Naive thymus-derived CD4-positive, alpha-beta T cell (primary cell): ENCODE measurements at regions of chr2 and their contacts with region 1.

Region 1: DNA sequence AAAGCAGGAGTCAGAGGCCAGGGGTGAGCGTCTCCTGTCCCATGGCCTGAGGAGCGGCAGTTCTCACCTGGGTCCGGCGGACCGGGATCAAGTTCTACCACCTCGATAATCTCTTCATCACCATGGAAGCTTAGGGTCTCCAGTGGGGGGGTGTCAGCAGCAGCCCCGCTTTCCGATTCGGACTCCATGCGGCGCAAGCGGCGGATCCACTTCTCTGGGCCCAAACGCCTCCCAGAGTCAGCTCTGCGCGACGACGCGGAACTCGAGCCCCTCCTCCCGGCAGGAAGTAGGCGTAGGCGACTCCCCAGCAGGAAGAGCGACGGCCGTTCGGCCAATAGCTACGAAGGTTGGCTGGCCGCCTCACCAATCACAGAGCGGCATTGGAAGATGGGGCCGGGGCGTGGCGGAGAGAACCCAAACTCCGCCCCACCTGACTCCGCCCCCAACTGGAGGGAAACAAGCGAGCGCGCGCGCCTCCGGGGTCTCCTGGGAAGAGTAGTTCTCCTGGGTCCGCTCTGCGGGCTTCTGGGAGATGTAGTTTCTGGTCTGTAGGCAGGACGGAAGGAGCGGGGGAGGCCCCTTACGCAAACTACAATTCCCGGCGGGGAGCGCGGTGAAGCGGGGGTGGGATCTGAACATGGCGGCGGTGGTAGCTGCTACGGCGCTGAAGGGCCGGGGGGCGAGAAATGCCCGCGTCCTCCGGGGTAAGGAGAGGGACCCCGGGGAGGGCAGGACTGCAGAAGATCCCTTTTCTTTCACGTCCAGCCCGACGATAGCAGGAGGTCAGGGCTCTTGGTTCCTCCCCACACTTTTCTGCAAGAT is at the starts of genes AAMP and PNKD:
- DNase-seq: peak; percentile 99 to 100 (median 100)
- ATAC-seq: peak; percentile 95
- H3K4me3 ChIP-seq: peak within 1 kb of the TSS; percentile 96
- H3K4me3 Mint-ChIP-seq: peak within 1 kb of the TSS; percentile 84 to 99 (median 93)
- H3K27ac ChIP-seq: peak within 1 kb of the TSS; percentile 92
- H3K27ac Mint-ChIP-seq: peak within 1 kb of the TSS; percentile 82 to 95 (median 92)
- H3K4me1 ChIP-seq: peaks cover 27 to 30% of the 10 kb centered on the region in 2 donors
- H3K4me1 Mint-ChIP-seq: peaks cover 30 to 59% (median 51%) of the 10 kb centered on the region in 7 donors
- H3K27me3 ChIP-seq: no peaks in the 10 kb centered on the region
- H3K27me3 Mint-ChIP-seq: no peaks in the 10 kb centered on the region
- total RNA-seq, gene AAMP: 54.1 to 67.0 (median 61.2) TPM
- total RNA-seq, gene PNKD: 18.5 to 38.4 (median 25.2) TPM

Region 2: GRCh38 chr2:218138072-218138471 is 132.0 kb before region 1 on chr2:
- CTCF ChIA-PET with region 1: no interaction called
- POLR2A ChIA-PET with region 1: no interaction called
- intact Hi-C with region 1: no loop called
- DNase-seq: no peak
- ATAC-seq: no peak
- H3K4me3 ChIP-seq: no peak overlapping the region
- H3K4me3 Mint-ChIP-seq: no peak overlapping the region
- H3K27ac ChIP-seq: no peak overlapping the region
- H3K27ac Mint-ChIP-seq: no peak overlapping the region
- H3K4me1 ChIP-seq: no peaks in the 10 kb centered on the region
- H3K4me1 Mint-ChIP-seq: peaks cover 0 to 9% (median 0%) of the 10 kb centered on the region in 7 donors
- H3K27me3 ChIP-seq: no peaks in the 10 kb centered on the region
- H3K27me3 Mint-ChIP-seq: peaks cover 17 to 42% (median 32%) of the 10 kb centered on the region in 5 donors

Region 3: DNA sequence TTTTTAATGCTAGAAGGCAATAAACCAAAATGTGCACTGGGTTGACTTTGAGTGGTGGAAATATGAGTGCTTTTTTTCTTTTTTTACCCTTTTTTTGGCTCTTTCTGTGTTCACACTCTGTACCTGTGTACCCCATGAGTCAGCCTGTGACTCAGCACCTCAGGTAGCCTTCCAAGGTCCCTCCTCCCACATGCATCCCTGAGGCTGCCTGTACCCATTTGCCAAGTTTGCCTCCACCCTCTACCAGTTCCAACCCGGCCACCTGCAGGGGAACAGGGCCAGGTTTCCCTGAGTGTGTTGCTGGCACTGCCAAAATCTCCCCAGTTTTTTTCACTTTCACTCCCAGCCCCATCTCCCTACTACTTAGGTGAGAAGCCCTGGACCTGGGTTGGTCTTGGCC is 117.3 kb before region 1 on chr2:
- CTCF ChIA-PET with region 1: no interaction called
- POLR2A ChIA-PET with region 1: no interaction called
- intact Hi-C with region 1: no loop called
- DNase-seq: no peak
- ATAC-seq: no peak
- H3K4me3 ChIP-seq: no peak overlapping the region
- H3K4me3 Mint-ChIP-seq: no peak overlapping the region
- H3K27ac ChIP-seq: no peak overlapping the region
- H3K27ac Mint-ChIP-seq: no peak overlapping the region
- H3K4me1 ChIP-seq: no peaks in the 10 kb centered on the region
- H3K4me1 Mint-ChIP-seq: peaks cover 0 to 8% (median 0%) of the 10 kb centered on the region in 7 donors
- H3K27me3 ChIP-seq: no peaks in the 10 kb centered on the region
- H3K27me3 Mint-ChIP-seq: peaks cover 0 to 42% (median 0%) of the 10 kb centered on the region in 5 donors

Region 4: DNA sequence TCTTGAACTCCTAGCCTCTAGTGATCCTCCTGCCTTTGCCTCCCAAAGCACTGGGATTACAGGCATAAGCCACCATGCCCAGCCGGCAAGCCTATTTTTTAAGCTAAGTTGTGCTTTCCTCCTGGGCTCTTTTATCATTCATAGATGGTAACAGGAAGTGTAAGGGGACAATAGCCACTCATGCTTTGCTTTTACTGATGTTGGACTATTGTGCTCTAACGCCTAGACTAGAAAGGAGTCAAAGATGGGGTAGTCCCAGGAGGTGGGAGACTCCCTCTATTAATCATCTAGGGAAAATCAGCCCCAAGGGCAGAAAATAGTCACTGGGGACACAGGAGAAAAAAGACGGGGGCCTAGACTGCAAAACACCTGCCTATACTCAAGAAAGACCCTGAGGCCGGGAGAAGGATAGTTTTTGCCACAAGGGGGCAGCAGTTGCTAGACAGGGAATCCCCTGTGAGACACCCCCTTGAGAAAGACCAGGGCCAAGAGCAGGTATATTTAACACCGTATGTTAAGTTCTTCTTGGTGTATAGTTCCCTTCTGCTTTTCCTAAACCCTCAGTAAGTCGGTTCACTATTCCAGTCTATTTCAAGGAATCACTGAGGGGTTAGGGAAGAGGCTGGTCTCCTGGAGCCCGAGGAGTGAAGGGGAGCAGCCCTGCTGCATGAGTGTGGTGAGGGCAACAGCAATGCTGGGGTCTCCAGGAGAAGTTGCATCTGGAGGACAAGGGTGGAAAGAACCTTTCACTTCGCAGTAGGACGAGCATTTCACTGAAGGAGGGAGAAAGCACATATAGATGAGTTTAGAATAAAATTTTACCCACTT is 101.3 kb before region 1 on chr2:
- CTCF ChIA-PET with region 1: no interaction called
- POLR2A ChIA-PET with region 1: no interaction called
- intact Hi-C with region 1: loop called in 1 of 2 experiments (anchors 1 kb)
- DNase-seq: peak; percentile 28 to 62 (median 52)
- ATAC-seq: peak; percentile 69
- H3K4me3 ChIP-seq: no peak overlapping the region
- H3K4me3 Mint-ChIP-seq: peak overlapping the region in 3 of 10 donors; percentile 7 to 34 (median 21)
- H3K27ac ChIP-seq: no peak overlapping the region
- H3K27ac Mint-ChIP-seq: peak overlapping the region in 2 of 9 donors; percentile 19 to 37
- H3K4me1 ChIP-seq: peaks cover 19 to 26% of the 10 kb centered on the region in 2 donors
- H3K4me1 Mint-ChIP-seq: peaks cover 28 to 41% (median 38%) of the 10 kb centered on the region in 7 donors
- H3K27me3 ChIP-seq: no peaks in the 10 kb centered on the region
- H3K27me3 Mint-ChIP-seq: peaks cover 0 to 51% (median 6%) of the 10 kb centered on the region in 5 donors

Region 5: GRCh38 chr2:218286570-218287459 is 16.7 kb after region 1 on chr2:
- CTCF ChIA-PET with region 1: interaction called, 188 read pairs
- POLR2A ChIA-PET with region 1: interaction called, 125 read pairs
- intact Hi-C with region 1: loop called (anchors 1 kb)
- DNase-seq: peak; percentile 53 to 90 (median 78)
- ATAC-seq: peak; percentile 87
- H3K4me3 ChIP-seq: peak overlapping the region; percentile 66
- H3K4me3 Mint-ChIP-seq: peak overlapping the region; percentile 85 to 97 (median 94)
- H3K27ac ChIP-seq: peak overlapping the region; percentile 93
- H3K27ac Mint-ChIP-seq: peak overlapping the region; percentile 95 to 99 (median 99)
- H3K4me1 ChIP-seq: peaks cover 74 to 77% of the 10 kb centered on the region in 2 donors
- H3K4me1 Mint-ChIP-seq: peaks cover 53 to 87% (median 76%) of the 10 kb centered on the region in 7 donors
- H3K27me3 ChIP-seq: no peaks in the 10 kb centered on the region
- H3K27me3 Mint-ChIP-seq: no peaks in the 10 kb centered on the region

Region 6: DNA sequence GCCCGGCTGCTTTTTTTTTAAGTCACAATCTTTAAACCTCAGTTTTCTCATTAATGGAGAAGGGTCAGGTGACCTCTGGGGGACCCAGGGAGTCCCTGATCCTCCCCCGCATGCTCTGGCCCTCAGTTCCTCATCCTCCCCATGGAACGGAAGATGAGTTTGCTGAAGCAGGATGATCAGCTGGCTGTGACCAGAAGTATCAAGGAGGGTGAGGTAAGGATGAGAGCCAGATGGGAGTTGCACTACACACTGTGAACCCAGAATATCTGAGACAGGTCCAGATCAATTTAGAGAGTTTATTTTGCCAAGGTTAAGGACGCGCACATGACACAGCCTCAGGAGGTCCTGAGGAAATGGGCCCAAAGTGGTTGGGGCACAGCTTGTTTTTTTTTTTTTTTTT is 90.3 kb after region 1 on chr2:
- CTCF ChIA-PET with region 1: interaction called, 79 read pairs
- POLR2A ChIA-PET with region 1: interaction called, 16 read pairs
- intact Hi-C with region 1: loop called (anchors 1 kb)
- DNase-seq: no peak
- ATAC-seq: peak; percentile 68
- H3K4me3 ChIP-seq: no peak overlapping the region
- H3K4me3 Mint-ChIP-seq: no peak overlapping the region
- H3K27ac ChIP-seq: no peak overlapping the region
- H3K27ac Mint-ChIP-seq: no peak overlapping the region
- H3K4me1 ChIP-seq: no peaks in the 10 kb centered on the region
- H3K4me1 Mint-ChIP-seq: peaks cover 0 to 6% (median under 1%) of the 10 kb centered on the region in 7 donors
- H3K27me3 ChIP-seq: no peaks in the 10 kb centered on the region
- H3K27me3 Mint-ChIP-seq: peaks cover 0 to 6% (median 0%) of the 10 kb centered on the region in 5 donors

Region 7: GRCh38 chr2:218568190-218569037 is 298.3 kb after region 1 on chr2 and contains the starts of genes CNOT9 and USP37:
- CTCF ChIA-PET with region 1: no interaction called
- POLR2A ChIA-PET with region 1: no interaction called
- intact Hi-C with region 1: loop called (anchors 1 kb)
- DNase-seq: peak; percentile 99 to 100 (median 100)
- ATAC-seq: peak; percentile 95
- H3K4me3 ChIP-seq: peak within 1 kb of the TSS; percentile 78
- H3K4me3 Mint-ChIP-seq: peak within 1 kb of the TSS; percentile 90 to 100 (median 98)
- H3K27ac ChIP-seq: peak within 1 kb of the TSS; percentile 96
- H3K27ac Mint-ChIP-seq: peak within 1 kb of the TSS; percentile 97 to 100 (median 99)
- H3K4me1 ChIP-seq: peaks cover 22 to 31% of the 10 kb centered on the region in 2 donors
- H3K4me1 Mint-ChIP-seq: peaks cover 45 to 73% (median 64%) of the 10 kb centered on the region in 7 donors
- H3K27me3 ChIP-seq: no peaks in the 10 kb centered on the region
- H3K27me3 Mint-ChIP-seq: no peaks in the 10 kb centered on the region
- total RNA-seq, gene CNOT9: 44.7 to 99.6 (median 53.8) TPM
- total RNA-seq, gene USP37: 16.6 to 36.3 (median 28.1) TPM

Region 8: GRCh38 chr2:218892693-218893348 is 622.7 kb after region 1 on chr2:
- CTCF ChIA-PET with region 1: no interaction called
- POLR2A ChIA-PET with region 1: no interaction called
- intact Hi-C with region 1: loop called in 1 of 2 experiments (anchors 5 kb)
- DNase-seq: peak; percentile 82 to 93 (median 91)
- ATAC-seq: peak; percentile 78
- H3K4me3 ChIP-seq: peak overlapping the region; percentile 48
- H3K4me3 Mint-ChIP-seq: peak overlapping the region; percentile 58 to 85 (median 75)
- H3K27ac ChIP-seq: peak overlapping the region; percentile 89
- H3K27ac Mint-ChIP-seq: peak overlapping the region; percentile 59 to 96 (median 89)
- H3K4me1 ChIP-seq: peaks cover 53 to 54% of the 10 kb centered on the region in 2 donors
- H3K4me1 Mint-ChIP-seq: peaks cover 38 to 56% (median 52%) of the 10 kb centered on the region in 7 donors
- H3K27me3 ChIP-seq: no peaks in the 10 kb centered on the region
- H3K27me3 Mint-ChIP-seq: peaks cover 0 to 76% (median 0%) of the 10 kb centered on the region in 5 donors

Region 9: GRCh38 chr2:219543601-219544358 is 1273.7 kb after region 1 on chr2 and contains the starts of genes CHPF and TMEM198:
- CTCF ChIA-PET with region 1: no interaction called
- POLR2A ChIA-PET with region 1: no interaction called
- intact Hi-C with region 1: loop called in 1 of 2 experiments (anchors 2 kb)
- DNase-seq: peak; percentile 79 to 94 (median 88)
- ATAC-seq: peak; percentile 86
- H3K4me3 ChIP-seq: peak within 1 kb of the TSS; percentile 51
- H3K4me3 Mint-ChIP-seq: peak within 1 kb of the TSS; percentile 83 to 95 (median 90)
- H3K27ac ChIP-seq: peak within 1 kb of the TSS; percentile 78
- H3K27ac Mint-ChIP-seq: peak within 1 kb of the TSS; percentile 71 to 90 (median 78)
- H3K4me1 ChIP-seq: peaks cover 10 to 12% of the 10 kb centered on the region in 2 donors
- H3K4me1 Mint-ChIP-seq: peaks cover 18 to 30% (median 25%) of the 10 kb centered on the region in 7 donors
- H3K27me3 ChIP-seq: no peaks in the 10 kb centered on the region
- H3K27me3 Mint-ChIP-seq: peaks cover 0 to 18% (median 11%) of the 10 kb centered on the region in 5 donors
- total RNA-seq, gene CHPF: 4.3 to 15.3 (median 5.7) TPM
- total RNA-seq, gene TMEM198: 0.45 to 0.69 (median 0.50) TPM in 4 of 5 experiments, not detected in the other